Mammary epithelial cell (primary cell): ENCODE measurements at regions of chr6 and their contacts with region 1.

Region 1: DNA sequence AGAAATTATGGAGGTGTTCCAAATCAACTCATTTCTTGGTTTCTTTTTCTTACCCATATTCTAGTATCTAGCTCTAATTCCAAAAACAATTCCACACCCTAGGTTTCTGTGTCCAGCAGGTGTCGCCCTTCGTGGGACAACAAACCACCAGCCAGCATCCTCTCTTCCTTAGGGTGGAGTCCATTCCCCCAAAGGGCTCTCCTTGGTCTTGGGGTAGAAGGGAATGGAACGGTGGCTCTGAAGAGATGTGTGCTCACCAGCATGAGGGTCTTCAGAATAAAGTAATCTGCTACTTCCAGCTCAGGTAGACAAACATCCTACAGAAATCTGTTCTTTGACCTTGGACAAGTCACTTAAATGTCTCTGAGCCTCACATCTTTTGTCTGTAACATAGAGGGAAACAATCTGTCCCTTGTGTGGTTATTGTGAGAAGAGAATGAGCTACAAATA is 7.2 kb downstream of the HLA-DMB start:
- DNase-seq: peak; percentile 40
- H3K4me3 ChIP-seq: no peak overlapping the region
- H3K27ac ChIP-seq: no peak overlapping the region
- H3K4me1 ChIP-seq: no peaks in the 10 kb centered on the region
- H3K27me3 ChIP-seq: peaks cover 2% of the 10 kb centered on the region
- CTCF ChIP-seq: peak; percentile 70 to 85

Region 2: DNA sequence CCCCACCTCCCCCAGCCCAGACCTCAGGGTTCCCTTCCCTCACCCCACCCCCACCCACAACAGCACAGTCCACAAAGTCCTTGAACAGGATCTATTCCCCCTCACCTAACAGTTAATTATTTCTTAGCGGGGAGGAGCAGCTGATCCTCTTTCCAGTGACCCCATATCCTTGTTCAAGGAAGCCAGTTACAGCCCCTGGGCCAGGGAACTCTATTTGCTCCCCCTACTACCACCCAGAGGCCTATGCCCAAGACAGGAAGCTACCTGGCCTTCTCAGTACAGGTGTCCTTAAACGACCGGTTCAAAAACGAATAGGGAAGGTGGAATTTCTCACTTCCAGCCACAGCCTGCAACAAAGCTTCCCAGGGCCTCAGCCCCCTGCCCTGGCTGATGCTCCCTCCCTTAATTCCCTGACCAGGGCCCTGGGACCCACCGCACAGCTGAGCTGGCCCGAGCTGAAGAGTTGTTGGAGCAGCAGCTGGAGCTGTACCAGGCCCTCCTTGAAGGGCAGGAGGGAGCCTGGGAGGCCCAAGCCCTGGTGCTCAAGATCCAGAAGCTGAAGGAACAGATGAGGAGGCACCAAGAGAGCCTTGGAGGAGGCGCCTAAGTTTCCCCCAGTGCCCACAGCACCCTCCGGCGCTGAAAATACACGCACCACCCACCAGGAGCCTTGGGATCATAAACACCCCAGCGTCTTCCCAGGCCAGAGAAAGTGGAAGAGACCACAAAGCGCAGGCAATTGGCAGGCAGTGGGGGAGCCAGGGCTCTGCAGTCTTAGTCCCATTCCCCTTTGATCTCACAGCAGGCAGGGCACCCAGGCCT is 1404.1 kb before region 1 on chr6:
- CTCF ChIA-PET with region 1: interaction called, 17 read pairs
- dilution Hi-C with region 1: no loop called
- in situ Hi-C with region 1: no loop called
- intact Hi-C with region 1: no loop called
- DNase-seq: no peak
- H3K4me3 ChIP-seq: no peak overlapping the region
- H3K27ac ChIP-seq: no peak overlapping the region
- H3K4me1 ChIP-seq: peaks cover 9% of the 10 kb centered on the region
- H3K27me3 ChIP-seq: no peaks in the 10 kb centered on the region
- CTCF ChIP-seq: no peak

Region 3: DNA sequence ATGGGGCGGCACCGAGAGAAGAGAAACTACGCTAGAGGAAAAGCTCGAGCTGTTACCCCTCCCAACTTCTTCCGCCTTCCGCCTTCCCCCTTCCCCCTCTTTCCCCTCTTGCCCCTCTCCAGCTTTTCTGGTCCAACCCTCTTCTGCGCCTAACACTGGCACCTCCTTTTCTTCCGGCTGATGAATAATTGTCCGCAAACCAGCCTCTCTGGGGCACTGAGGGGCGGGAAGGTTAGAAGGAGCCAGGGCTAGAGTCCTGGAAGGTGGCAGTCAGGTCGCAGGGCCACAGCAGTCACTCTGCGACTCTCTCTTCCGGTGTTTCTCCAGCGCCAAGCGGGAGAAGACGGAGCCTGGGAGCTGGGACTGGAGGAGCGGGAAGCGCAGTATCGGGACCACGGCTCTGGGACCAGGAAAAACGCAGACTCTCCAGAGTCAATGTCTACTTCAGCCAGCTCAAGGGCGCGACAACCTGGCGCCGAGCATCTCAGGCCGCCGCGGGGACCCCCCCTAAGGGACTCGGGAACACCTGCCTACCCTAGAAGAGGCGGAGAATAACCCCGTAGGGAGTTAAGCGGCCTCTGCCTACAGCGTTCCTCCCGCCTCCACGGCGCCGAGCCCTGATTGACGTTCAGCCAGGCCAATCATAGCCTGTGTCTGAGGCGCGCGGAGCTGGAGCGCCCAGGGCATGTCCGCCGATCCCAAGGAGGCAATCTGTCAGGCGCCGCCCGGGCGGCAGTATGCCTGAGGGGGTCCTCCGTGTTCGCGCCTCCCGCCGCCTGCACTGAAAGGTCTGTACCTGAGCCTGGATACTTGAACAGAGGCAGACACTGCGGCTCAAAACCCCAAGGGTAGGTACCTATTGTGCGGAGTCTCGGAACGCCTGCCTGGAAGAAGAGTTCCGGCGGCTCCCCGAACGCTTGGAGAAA is 39.3 kb before region 1 on chr6:
- CTCF ChIA-PET with region 1: interaction called, 12 read pairs
- dilution Hi-C with region 1: no loop called
- in situ Hi-C with region 1: loop called in 1 of 2 experiments (anchors 5 kb)
- intact Hi-C with region 1: loop called (anchors 5 kb)
- DNase-seq: peak; percentile 91
- H3K4me3 ChIP-seq: peak overlapping the region; percentile 72 to 84 (median 76)
- H3K27ac ChIP-seq: peak overlapping the region; percentile 65
- H3K4me1 ChIP-seq: peaks cover 13% of the 10 kb centered on the region
- H3K27me3 ChIP-seq: no peaks in the 10 kb centered on the region
- CTCF ChIP-seq: no peak

Region 4: DNA sequence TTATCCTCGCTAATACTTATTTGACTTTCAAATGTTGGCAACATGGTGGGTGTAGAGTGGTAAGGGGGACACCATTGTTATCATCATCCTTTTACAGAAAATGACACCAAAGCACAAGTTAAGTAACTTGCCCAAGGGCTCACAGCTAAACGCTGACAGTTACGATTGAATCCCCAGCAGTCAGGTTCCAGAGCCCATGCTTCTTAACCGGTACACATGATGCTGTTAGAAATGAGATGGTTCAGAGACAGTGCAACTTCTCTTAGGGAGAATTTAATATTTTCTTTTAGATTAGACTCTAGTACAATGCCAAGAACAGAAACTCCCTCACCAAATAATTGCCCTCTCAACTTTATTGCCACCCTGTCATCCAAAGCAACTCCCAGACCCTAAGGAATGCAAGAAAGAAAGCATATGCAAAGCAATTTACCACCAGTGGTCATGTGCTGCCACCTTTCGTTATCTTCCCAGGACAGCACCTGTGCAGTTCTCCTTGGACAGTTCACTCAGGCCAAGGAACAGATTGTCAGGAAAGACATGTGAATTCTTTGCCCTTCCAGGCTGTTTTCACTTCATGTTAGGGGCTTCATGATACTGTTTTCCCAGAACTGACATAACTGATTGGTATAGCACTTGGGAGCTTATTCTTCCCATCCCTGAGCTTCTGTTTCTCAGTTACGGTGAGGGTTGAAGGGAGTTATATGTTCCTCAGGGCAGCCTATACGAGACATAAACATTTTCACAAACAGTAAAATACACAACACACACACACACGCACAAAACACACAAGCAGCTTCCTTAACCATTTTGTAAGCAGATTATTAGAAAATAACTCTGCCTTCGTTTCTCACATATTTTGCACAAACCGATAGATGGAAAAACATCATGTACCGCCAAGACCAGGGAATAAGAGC is 14.1 kb after region 1 on chr6:
- CTCF ChIA-PET with region 1: interaction called, 5 read pairs
- dilution Hi-C with region 1: no loop called
- in situ Hi-C with region 1: no loop called
- intact Hi-C with region 1: loop called (anchors 2 kb)
- DNase-seq: peak; percentile 51
- H3K4me3 ChIP-seq: no peak overlapping the region
- H3K27ac ChIP-seq: no peak overlapping the region
- H3K4me1 ChIP-seq: peaks cover 4% of the 10 kb centered on the region
- H3K27me3 ChIP-seq: no peaks in the 10 kb centered on the region
- CTCF ChIP-seq: peak; percentile 63 to 80

Region 5: DNA sequence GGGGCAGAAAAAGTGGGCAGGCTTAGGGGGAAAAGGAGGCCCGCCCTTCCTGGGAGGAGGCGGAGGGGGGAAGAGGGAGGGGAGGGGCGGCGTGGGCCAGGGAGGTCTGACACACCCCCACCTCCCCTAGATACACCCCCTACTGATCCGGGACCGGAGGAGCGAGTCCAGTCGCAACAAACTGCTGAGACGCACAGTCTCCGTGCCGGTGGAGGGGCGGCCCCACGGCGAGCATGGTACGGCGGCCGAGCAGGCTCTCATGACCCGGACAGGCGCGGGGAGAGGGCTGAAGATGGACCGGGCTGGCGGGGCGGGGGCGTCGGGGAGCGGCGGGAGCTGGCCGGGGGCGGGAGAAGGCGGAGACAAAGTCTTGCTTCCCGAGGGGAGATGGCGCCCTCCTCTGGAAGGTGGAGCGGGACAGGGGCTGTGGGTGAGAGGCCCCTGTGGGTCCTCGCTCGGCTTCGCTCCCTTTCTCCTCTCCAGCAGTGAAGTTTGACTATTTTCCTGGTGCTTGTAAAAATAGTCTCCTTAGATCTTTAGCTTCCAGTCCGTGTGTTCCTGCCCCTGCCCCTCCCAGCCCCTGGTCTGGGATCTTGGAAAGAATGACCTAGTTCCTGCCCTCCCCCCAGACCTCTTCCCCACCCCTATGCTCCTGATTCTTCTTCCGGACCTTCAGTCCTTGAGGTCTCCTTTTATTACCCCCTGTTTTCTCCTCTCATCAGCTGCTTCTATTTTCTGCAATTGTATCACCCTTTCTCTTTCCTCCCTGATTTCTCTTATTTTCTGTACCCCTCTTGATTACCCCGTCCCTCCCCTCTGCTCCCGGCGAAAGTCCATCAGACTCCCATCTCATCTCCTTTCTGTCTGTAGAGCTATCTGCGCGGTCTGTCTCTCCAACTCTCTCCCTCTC is 492.3 kb after region 1 on chr6:
- CTCF ChIA-PET with region 1: no interaction called
- dilution Hi-C with region 1: no loop called
- in situ Hi-C with region 1: no loop called
- intact Hi-C with region 1: no loop called
- DNase-seq: peak; percentile 82
- H3K4me3 ChIP-seq: peak overlapping the region; percentile 55 to 72 (median 68)
- H3K27ac ChIP-seq: peak overlapping the region; percentile 68
- H3K4me1 ChIP-seq: peaks cover 42% of the 10 kb centered on the region
- H3K27me3 ChIP-seq: no peaks in the 10 kb centered on the region
- CTCF ChIP-seq: peak; percentile 36 to 81